GM23248 (cell line): ENCODE measurements at regions of chr13 and their contacts with region 1.

Region 1: GRCh38 chr13:27362064-27362883 is 62.1 kb upstream of the GTF3A start:
- DNase-seq: peak; percentile 86
- H3K4me3 ChIP-seq: peak overlapping the region; percentile 67
- H3K27ac ChIP-seq: no peak overlapping the region
- H3K4me1 ChIP-seq: no peaks in the 10 kb centered on the region
- H3K27me3 ChIP-seq: peaks cover 14% of the 10 kb centered on the region

Region 2: GRCh38 chr13:25930653-25931052 is 1431.6 kb before region 1 on chr13:
- in situ Hi-C with region 1: no loop called
- DNase-seq: no peak
- H3K4me3 ChIP-seq: no peak overlapping the region
- H3K27ac ChIP-seq: no peak overlapping the region
- H3K4me1 ChIP-seq: no peaks in the 10 kb centered on the region
- H3K27me3 ChIP-seq: no peaks in the 10 kb centered on the region

Region 3: DNA sequence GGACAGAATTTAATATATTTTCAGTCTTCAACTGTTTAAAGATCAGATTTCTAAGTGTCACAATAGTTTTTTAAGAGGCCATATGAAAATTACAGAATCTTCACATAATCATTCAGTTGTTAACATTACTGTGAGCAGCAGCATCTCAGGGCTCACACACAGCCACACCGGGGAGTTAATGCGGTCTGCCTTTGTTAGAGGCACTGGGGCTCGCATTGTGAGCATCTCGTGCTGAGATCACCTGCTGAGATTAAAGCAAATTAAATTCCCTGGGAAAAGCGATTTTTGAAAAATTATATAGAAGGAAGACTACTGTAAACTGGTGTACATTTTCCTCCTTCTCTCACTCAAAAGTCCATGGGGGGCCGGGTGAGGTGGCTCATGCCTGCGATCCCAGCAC is 618.3 kb before region 1 on chr13:
- in situ Hi-C with region 1: no loop called
- DNase-seq: no peak
- H3K4me3 ChIP-seq: no peak overlapping the region
- H3K27ac ChIP-seq: no peak overlapping the region
- H3K4me1 ChIP-seq: no peaks in the 10 kb centered on the region
- H3K27me3 ChIP-seq: peaks cover 35% of the 10 kb centered on the region; the same call in 1 of the 2 replicates

Region 4: GRCh38 chr13:26985285-26985878 is 376.9 kb before region 1 on chr13:
- in situ Hi-C with region 1: loop called (anchors 5 kb)
- DNase-seq: peak; percentile 86
- H3K4me3 ChIP-seq: no peak overlapping the region
- H3K27ac ChIP-seq: no peak overlapping the region
- H3K4me1 ChIP-seq: peaks cover 25% of the 10 kb centered on the region
- H3K27me3 ChIP-seq: no peaks in the 10 kb centered on the region

Region 5: GRCh38 chr13:27980280-27980998 is 618.2 kb after region 1 on chr13:
- in situ Hi-C with region 1: loop called (anchors 10 kb)
- DNase-seq: no peak
- H3K4me3 ChIP-seq: no peak overlapping the region
- H3K27ac ChIP-seq: no peak overlapping the region
- H3K4me1 ChIP-seq: no peaks in the 10 kb centered on the region
- H3K27me3 ChIP-seq: peaks cover 77% of the 10 kb centered on the region